Heart left ventricle (tissue), 16 donors: ENCODE measurements at regions of chr1 and their contacts with region 1.

Region 1: DNA sequence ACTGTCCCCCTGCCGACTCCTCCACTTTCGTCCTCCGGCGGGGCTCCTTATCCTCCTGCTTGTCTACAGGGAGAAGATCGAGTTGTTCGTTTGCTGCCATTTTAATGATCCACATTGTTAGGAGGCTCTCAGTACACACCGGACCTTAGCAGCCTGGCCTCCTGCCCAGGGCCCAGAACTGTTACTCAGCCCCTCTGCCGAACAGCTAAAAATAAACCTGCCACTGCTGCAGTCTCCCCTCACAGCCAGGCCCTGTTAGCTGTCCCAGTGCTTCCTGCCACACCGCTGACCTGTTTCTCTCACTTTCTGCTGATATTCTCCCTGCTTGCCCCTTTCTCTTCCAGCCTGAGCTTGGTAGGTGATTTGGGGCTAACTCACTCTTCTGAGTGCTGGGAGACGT is 8.3 kb downstream of the MAPKAPK2 start:
- DNase-seq: peak; percentile 86 to 94 (median 88)
- ATAC-seq: peak; percentile 77 to 89 (median 82)
- H3K4me3 ChIP-seq: peak overlapping the region in 8 of 12 donors; percentile 4 to 29 (median 18)
- H3K27ac ChIP-seq: peak overlapping the region; percentile 79 to 99 (median 96)
- H3K4me1 ChIP-seq: peaks cover 34 to 100% (median 98%) of the 10 kb centered on the region in 12 donors
- H3K27me3 ChIP-seq: no peaks in the 10 kb centered on the region
- CTCF ChIP-seq: no peak
- POLR2A ChIP-seq: no peak

Region 2: DNA sequence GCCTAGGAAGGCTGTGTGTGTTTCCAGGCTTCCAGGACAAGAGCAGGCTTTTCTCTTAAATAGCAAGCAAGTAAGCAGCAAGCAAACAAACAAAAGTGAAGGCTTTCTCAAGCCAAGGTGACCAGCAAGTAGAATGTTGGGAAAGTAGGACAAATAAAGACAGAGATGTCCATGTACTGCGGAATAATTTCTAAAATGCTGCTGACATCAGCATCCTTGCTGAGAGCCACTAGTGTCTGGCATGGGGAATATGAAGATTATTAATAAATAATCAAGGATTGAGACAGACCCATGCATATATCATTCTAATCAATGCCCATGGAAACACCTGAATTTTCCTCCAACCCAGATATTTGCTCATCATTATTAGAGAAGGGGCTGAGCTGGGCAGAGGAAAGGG is 64.1 kb before region 1 on chr1:
- intact Hi-C with region 1: no loop called
- DNase-seq: no peak
- ATAC-seq: no peak
- H3K4me3 ChIP-seq: no peak overlapping the region
- H3K27ac ChIP-seq: no peak overlapping the region
- H3K4me1 ChIP-seq: peaks cover 0 to 14% (median 2%) of the 10 kb centered on the region in 12 donors
- H3K27me3 ChIP-seq: no peaks in the 10 kb centered on the region
- CTCF ChIP-seq: no peak
- POLR2A ChIP-seq: no peak

Region 3: GRCh38 chr1:206658264-206658980 is 34.6 kb before region 1 on chr1:
- intact Hi-C with region 1: loop called in 1 of 10 experiments (anchors 5 kb)
- DNase-seq: peak; percentile 60 to 82 (median 64)
- ATAC-seq: peak; percentile 48 to 59 (median 56)
- H3K4me3 ChIP-seq: peak overlapping the region in 9 of 12 donors; percentile 1 to 46 (median 31)
- H3K27ac ChIP-seq: peak overlapping the region; percentile 78 to 96 (median 88)
- H3K4me1 ChIP-seq: peaks cover 5 to 92% (median 59%) of the 10 kb centered on the region in 12 donors
- H3K27me3 ChIP-seq: no peaks in the 10 kb centered on the region
- CTCF ChIP-seq: peak; percentile 69 to 90 (median 87)
- POLR2A ChIP-seq: peak in 1 of 2 donors; percentile 17

Region 4: GRCh38 chr1:206663832-206664652 is 29.0 kb before region 1 on chr1:
- intact Hi-C with region 1: loop called in 3 of 10 experiments (anchors 2 to 5 kb)
- DNase-seq: peak; percentile 75 to 86 (median 76)
- ATAC-seq: peak; percentile 71 to 80 (median 76)
- H3K4me3 ChIP-seq: peak overlapping the region in 10 of 12 donors; percentile 1 to 46 (median 30)
- H3K27ac ChIP-seq: peak overlapping the region; percentile 78 to 96 (median 88)
- H3K4me1 ChIP-seq: peaks cover 0 to 62% (median 27%) of the 10 kb centered on the region in 12 donors
- H3K27me3 ChIP-seq: peaks cover 0 to 10% (median 0%) of the 10 kb centered on the region in 9 donors
- CTCF ChIP-seq: peak; percentile 67 to 90 (median 84)
- POLR2A ChIP-seq: peak in 1 of 2 donors; percentile 59

Region 5: GRCh38 chr1:206738370-206739366 is 45.6 kb after region 1 on chr1:
- intact Hi-C with region 1: no loop called
- DNase-seq: no peak
- ATAC-seq: no peak
- H3K4me3 ChIP-seq: no peak overlapping the region
- H3K27ac ChIP-seq: peak overlapping the region in 9 of 12 donors; percentile 44 to 80 (median 67)
- H3K4me1 ChIP-seq: peaks cover 0 to 63% (median 36%) of the 10 kb centered on the region in 12 donors
- H3K27me3 ChIP-seq: no peaks in the 10 kb centered on the region
- CTCF ChIP-seq: peak in 5 of 12 donors; percentile 12 to 29 (median 13)
- POLR2A ChIP-seq: no peak